Sciatic nerve (tissue), 2 donors: ENCODE measurements at regions of chr1 and their contacts with region 1.

Region 1: GRCh38 chr1:64251971-64252370 is 48.5 kb downstream of the UBE2U start:
- DNase-seq: no peak
- ATAC-seq: no peak

Region 2: GRCh38 chr1:64171797-64172281 is 80.1 kb before region 1 on chr1:
- intact Hi-C with region 1: no loop called
- DNase-seq: no peak
- ATAC-seq: no peak

Region 3: DNA sequence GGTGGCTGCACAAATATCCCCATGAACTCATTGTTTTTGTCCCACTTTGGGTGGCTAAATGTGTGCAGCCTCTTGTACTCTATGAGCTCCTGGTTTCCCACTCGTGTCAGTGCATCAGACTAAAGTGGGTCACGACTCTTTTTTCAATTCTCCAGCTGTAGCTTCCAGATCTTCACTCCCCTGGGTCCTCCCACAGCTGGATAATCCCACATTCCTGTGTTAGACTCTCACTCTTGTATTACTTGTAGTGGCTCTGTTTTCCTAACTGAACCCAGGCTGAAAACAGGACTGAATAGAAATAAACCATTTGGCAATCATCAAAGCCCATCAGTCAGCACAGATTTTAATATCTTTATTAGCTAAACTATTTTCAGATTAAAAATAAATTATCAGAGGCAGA is 11.9 kb after region 1 on chr1:
- intact Hi-C with region 1: loop called (anchors 1 kb)
- DNase-seq: no peak
- ATAC-seq: no peak